B cell (primary cell): ENCODE measurements at regions of chr6 and their contacts with region 1.

Region 1: GRCh38 chr6:6724539-6725467 is 136.3 kb downstream of the LY86 start:
- DNase-seq: peak; percentile 70
- ATAC-seq: peak; percentile 77
- H3K4me3 ChIP-seq: peak overlapping the region in 4 of 5 experiments; percentile 6 to 56 (median 25)
- H3K4me3 Mint-ChIP-seq: peak overlapping the region; percentile 55
- H3K27ac ChIP-seq: no peak overlapping the region
- H3K27ac Mint-ChIP-seq: no peak overlapping the region
- H3K4me1 ChIP-seq: peaks cover 11 to 18% of the 10 kb centered on the region in 2 donors
- H3K4me1 Mint-ChIP-seq: peaks cover 9% of the 10 kb centered on the region
- H3K27me3 ChIP-seq: peaks cover 0 to 23% (median 12%) of the 10 kb centered on the region in 4 experiments
- H3K27me3 Mint-ChIP-seq: peaks cover 33% of the 10 kb centered on the region
- CTCF ChIP-seq: peak; percentile 67

Region 2: DNA sequence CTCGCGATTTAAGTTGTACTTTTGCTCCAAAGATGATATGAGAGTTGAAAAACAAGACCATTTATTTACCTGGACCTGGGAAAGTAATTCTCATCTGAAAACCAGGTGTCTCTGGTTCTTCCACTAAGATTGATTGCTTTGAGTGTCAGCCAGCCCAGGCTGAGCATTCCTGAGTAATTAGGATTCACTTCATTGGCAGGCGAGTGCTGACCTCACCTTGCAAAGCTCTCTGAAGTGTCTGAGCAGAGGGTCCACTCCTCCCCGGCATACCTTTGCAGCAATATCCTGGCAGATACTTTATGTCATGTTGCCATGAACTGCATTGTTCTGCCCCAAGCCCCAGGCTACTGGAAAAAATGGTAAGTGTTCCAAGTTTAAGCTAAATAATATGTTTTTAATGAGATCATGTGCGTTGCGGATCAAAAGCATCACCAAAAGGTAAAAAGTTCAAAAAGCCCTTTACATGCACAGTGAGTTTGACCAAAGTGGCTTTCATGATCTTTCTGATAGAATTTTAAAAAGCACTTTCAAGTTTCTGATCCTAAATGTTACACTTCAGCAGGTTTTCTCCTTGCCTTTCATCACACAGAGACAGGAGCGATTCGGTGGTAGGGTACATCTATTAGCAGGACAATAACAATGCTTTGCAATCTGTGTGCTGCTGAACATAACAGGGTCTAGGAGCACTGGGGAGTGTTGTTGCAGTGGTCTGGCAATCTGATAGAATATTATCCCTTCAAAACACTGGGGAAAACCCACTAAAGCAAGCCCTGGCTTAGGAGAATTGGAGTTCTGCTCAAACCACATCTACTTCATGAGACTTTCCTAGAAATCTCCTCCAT is 1505.3 kb after region 1 on chr6:
- CTCF ChIA-PET with region 1: no interaction called
- POLR2A ChIA-PET with region 1: no interaction called
- intact Hi-C with region 1: loop called (anchors 10 kb)
- DNase-seq: no peak
- ATAC-seq: no peak
- H3K4me3 ChIP-seq: no peak overlapping the region
- H3K4me3 Mint-ChIP-seq: no peak overlapping the region
- H3K27ac ChIP-seq: no peak overlapping the region
- H3K27ac Mint-ChIP-seq: no peak overlapping the region
- H3K4me1 ChIP-seq: no peaks in the 10 kb centered on the region
- H3K4me1 Mint-ChIP-seq: no peaks in the 10 kb centered on the region
- H3K27me3 ChIP-seq: peaks cover 0 to 5% (median 0%) of the 10 kb centered on the region in 4 experiments
- H3K27me3 Mint-ChIP-seq: peaks cover 27% of the 10 kb centered on the region
- CTCF ChIP-seq: no peak